Sigmoid colon (tissue), 7 donors: ENCODE measurements at regions of chr11 and their contacts with region 1.

Region 1: GRCh38 chr11:35138943-35139721 is at the start of gene CD44:
- DNase-seq: peak; percentile 90
- H3K4me3 ChIP-seq: peak within 1 kb of the TSS; percentile 65 to 90 (median 82)
- H3K27ac ChIP-seq: peak within 1 kb of the TSS; percentile 81 to 94 (median 92)
- H3K4me1 ChIP-seq: peaks cover 0 to 55% (median 47%) of the 10 kb centered on the region in 4 donors
- H3K27me3 ChIP-seq: no peaks in the 10 kb centered on the region
- CTCF ChIP-seq: no peak
- EP300 ChIP-seq: no peak
- POLR2A ChIP-seq: peak in 1 of 2 donors; percentile 23
- total RNA-seq, gene CD44: 74.2 to 228 (median 119) TPM

Region 2: DNA sequence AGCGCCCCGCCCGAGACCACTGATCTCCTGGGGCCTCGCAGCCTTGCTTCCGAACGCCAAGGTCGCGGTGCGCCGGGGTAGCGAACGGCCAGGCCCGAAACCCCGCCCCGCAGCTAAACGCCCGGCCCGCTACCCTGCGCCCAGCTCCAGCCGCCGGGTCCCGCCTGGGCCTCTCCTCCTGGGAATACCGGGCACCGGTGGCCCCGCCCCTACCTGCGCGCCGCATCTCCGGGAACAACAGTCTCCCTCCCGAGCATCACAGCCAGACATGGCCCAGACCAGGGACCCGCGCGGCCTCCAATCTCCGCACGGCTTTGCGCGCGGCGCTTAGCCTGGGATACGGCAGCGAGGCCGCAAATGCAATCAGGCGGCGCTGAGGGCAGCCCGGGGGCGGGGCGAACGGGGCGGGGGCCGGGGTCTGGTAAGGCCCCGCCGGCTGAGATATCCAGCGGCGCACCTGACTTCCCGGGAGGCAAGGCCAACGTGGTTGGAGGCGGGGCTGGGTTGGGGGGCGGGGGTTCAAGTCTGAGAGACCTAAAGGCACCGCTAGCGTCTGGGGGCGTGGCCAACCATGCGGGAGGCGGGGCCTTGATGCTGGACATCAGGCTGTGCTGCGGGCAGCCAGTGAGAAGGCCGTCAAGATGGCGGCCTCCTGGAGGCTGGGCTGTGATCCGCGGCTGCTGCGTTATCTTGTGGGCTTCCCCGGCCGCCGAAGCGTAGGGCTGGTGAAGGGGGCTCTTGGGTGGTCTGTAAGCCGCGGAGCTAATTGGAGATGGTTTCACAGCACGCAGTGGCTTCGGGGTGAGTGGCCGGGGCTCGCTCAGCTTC is 222.9 kb before region 1 on chr11 and contains the starts of genes APIP and PDHX:
- intact Hi-C with region 1: loop called (anchors 10 kb)
- DNase-seq: peak; percentile 99
- H3K4me3 ChIP-seq: peak within 1 kb of the TSS; percentile 80 to 93 (median 88)
- H3K27ac ChIP-seq: peak within 1 kb of the TSS; percentile 95 to 98 (median 96)
- H3K4me1 ChIP-seq: peaks cover 0 to 35% (median 28%) of the 10 kb centered on the region in 4 donors
- H3K27me3 ChIP-seq: no peaks in the 10 kb centered on the region
- CTCF ChIP-seq: no peak
- EP300 ChIP-seq: no peak
- POLR2A ChIP-seq: peak; percentile 94 to 96
- total RNA-seq, gene APIP: 33.0 to 43.9 (median 41.5) TPM
- total RNA-seq, gene PDHX: 27.7 to 32.8 (median 31.0) TPM

Region 3: GRCh38 chr11:35165423-35166368 is 26.6 kb after region 1 on chr11:
- intact Hi-C with region 1: no loop called
- DNase-seq: no peak
- H3K4me3 ChIP-seq: no peak overlapping the region
- H3K27ac ChIP-seq: peak overlapping the region; percentile 50 to 82 (median 72)
- H3K4me1 ChIP-seq: peaks cover 0 to 96% (median 84%) of the 10 kb centered on the region in 4 donors
- H3K27me3 ChIP-seq: no peaks in the 10 kb centered on the region
- CTCF ChIP-seq: no peak
- EP300 ChIP-seq: no peak
- POLR2A ChIP-seq: no peak

Region 4: DNA sequence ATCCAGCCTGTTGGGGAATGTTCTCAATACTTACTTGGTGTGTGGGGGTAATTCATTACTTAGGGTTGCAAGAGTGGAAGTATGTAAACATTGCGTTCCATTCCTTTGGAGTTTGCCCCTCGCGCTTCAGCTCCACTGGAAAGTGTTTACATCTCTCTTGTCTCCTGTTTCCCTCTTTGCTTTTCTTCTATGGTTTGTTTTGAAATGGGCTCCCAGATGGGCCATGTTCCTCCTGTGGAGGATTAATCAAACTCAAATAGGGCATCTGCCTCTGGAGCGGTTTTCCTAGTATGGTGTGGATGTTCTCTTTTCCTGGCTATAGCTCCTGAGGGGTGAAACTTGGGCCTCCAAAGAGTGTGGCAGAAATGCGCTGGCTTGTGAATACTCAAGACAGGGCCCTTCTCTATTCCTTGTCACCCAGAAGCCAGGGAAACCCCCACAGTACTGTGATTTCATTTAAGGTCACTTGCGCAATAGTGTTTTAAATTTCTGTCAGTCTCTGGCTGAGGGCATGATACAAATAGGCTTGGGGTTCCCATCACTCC is 51.7 kb after region 1 on chr11:
- intact Hi-C with region 1: loop called (anchors 2 kb)
- DNase-seq: no peak
- H3K4me3 ChIP-seq: no peak overlapping the region
- H3K27ac ChIP-seq: peak overlapping the region; percentile 68 to 80 (median 78)
- H3K4me1 ChIP-seq: peaks cover 0 to 58% (median 42%) of the 10 kb centered on the region in 4 donors
- H3K27me3 ChIP-seq: no peaks in the 10 kb centered on the region
- CTCF ChIP-seq: no peak
- EP300 ChIP-seq: peak in 1 of 4 donors; percentile 67
- POLR2A ChIP-seq: no peak

Region 5: DNA sequence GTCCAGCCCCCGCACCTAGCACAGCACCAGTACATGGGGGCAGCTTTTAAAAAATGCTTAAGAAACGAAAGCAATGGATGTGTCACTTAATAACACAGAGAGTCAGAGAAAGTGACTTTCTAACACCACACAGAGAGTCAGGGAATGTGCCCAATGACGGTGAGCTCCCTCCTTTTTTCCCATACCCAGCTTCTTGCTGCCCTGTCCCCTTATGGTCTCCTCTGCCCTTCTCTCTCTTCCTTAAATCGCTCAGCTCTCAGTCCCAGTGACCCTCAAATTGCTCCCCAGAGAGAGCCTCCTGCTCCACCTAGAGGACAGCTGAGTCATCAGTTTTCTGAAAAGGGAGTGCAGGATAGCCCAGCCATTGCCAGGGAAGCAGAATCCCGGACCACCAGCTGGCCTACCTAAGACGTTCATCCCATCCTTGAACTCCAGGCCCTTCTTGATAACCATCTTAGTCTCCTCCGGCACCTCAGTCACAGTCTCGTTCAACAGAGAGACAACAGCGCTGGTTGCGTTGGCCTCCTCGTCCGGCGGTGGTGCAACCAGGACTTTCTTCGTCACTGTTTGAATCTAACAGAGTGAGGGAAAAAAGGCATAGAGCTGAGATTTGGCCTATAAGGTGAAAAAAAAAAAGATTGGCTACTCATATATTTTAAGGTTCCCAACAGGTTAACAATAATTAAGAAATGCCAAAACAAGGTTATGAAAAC is 166.7 kb after region 1 on chr11:
- intact Hi-C with region 1: loop called (anchors 5 kb)
- DNase-seq: no peak
- H3K4me3 ChIP-seq: no peak overlapping the region
- H3K27ac ChIP-seq: no peak overlapping the region
- H3K4me1 ChIP-seq: peaks cover 0 to 23% (median 9%) of the 10 kb centered on the region in 4 donors
- H3K27me3 ChIP-seq: no peaks in the 10 kb centered on the region
- CTCF ChIP-seq: peak; percentile 21 to 45 (median 43)
- EP300 ChIP-seq: no peak
- POLR2A ChIP-seq: no peak